BJ (cell line): ENCODE measurements at regions of chr14 and their contacts with region 1.

Region 1: DNA sequence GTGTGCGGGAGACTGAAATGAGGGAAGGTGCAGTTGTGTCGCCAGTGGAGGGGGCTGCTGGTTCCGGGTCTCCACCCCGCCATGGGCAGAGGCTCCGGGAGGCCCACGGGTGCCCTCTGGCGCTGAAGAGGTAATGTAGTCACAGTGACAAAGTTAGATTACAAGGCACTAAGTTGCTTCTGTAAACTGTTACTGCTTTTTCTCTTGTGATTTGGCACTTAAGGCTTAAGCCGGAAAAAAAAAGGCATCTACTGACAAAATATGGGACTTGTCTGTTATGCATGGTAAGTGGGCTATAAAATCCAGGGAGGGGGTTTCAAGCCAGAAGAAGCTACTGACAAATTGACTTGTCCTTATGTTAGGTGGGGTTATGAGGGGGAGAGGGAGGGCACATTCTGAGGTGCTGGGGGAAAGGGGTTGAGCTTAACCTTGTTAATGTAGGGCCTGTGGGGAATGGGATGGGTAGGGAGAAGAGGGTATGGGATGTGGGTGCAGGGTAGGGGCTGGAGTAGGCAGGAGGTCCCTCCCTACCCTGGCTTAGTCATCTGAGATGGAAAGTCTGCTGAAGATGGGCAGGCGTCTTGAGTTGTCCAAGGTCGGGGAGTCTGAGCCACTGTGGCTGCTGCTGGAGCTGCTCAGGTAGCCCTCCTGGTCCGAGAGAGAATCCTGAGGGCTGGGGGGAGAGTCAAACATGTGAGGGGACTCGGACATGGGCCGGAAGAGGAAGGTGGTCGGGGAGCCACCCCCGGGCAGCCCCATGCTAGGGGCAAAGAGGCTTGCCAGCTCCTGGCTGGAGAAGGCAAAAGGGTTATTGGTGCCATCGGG is 3.7 kb downstream of the ZFP36L1 start:
- DNase-seq: no peak
- H3K4me3 ChIP-seq: peak overlapping the region; percentile 93
- H3K27me3 ChIP-seq: no peaks in the 10 kb centered on the region
- CTCF ChIP-seq: peak; percentile 69

Region 2: GRCh38 chr14:68248481-68249255 is 540.5 kb before region 1 on chr14:
- CTCF ChIA-PET with region 1: interaction called, 13 read pairs
- POLR2A ChIA-PET with region 1: interaction called, 30 read pairs
- DNase-seq: no peak
- H3K4me3 ChIP-seq: no peak overlapping the region
- H3K27me3 ChIP-seq: no peaks in the 10 kb centered on the region
- CTCF ChIP-seq: peak; percentile 53

Region 3: GRCh38 chr14:68359837-68360552 is 429.2 kb before region 1 on chr14:
- CTCF ChIA-PET with region 1: no interaction called
- POLR2A ChIA-PET with region 1: interaction called, 20 read pairs
- DNase-seq: peak; percentile 41
- H3K4me3 ChIP-seq: no peak overlapping the region
- H3K27me3 ChIP-seq: no peaks in the 10 kb centered on the region
- CTCF ChIP-seq: no peak

Region 4: DNA sequence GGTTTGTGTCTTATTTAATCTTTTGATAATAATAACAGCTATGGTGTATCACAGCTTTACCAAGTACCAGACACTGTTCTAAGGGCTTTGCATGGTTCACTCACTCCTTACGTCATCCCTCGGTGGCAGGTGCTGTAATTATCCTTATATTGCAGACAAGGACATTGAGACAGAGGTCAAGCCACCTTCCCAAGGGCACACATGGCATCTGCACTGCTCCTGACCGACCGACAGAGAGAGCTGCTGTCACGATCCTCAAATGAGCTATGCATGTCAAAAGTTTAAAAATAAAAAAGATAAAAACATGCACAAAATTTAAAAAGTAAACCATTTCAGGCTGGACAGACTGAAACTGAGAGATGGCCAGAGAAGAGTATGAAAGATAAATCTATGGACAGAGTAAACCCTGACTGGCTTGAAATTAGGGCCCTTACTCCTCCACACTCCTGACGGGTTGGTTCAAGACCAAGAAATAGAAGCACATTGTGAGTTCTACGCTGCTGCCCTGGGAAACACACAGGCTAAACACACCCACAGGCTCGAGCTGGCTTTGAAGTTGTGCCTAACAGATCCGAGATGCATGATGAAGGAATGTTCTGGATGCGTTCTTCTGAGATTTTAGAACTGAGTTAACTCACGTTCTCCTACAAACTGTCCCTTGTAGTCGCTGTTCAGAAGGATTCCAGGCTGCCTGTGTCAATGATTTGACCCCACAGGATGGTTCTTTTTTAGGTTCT is 265.1 kb before region 1 on chr14:
- CTCF ChIA-PET with region 1: interaction called, 4 read pairs
- POLR2A ChIA-PET with region 1: interaction called, 11 read pairs
- DNase-seq: no peak
- H3K4me3 ChIP-seq: no peak overlapping the region
- H3K27me3 ChIP-seq: no peaks in the 10 kb centered on the region
- CTCF ChIP-seq: peak; percentile 43

Region 5: DNA sequence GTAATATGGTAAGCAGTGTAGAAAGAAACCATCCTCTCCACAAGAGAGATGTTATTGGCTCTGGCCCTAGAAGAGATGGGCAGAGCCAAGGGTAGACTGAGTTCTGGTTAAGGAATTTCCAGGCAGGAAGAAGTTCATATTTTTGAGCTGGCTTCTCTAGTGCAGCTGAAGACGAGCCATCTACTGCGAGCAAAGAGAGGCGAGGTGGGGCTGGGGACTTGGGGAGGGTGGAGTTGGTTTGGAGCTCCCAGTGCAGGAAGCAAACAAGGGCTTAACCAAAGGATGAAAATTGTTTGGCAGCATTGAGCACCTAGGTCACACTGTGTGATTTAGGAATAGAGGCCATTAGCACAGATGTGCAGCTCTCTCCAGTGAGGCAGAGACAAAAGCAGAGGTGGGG is 235.9 kb before region 1 on chr14:
- CTCF ChIA-PET with region 1: interaction called, 5 read pairs
- POLR2A ChIA-PET with region 1: interaction called, 11 read pairs
- DNase-seq: no peak
- H3K4me3 ChIP-seq: no peak overlapping the region
- H3K27me3 ChIP-seq: no peaks in the 10 kb centered on the region
- CTCF ChIP-seq: no peak

Region 6: DNA sequence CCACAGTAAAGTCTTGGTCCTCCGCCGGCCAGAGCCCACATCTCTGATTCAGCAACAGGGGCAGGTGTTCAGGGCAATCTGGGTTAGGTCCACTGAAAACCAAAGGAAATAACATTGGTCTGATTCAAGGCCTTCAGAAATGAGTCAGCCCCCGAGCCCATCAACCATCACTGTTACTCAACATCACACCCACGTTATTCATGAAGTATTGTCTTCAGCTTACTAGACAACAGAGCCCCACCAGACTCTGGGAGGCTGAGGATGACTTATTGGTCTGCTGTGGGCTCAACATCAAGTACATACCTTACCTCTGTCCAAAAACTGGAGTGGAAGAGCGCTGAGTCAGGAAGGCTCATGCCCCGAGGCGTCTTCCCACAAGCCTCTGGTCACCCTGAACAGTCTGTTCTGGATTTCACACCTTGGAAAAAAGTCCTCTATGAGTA is 93.9 kb before region 1 on chr14:
- CTCF ChIA-PET with region 1: interaction called, 10 read pairs
- POLR2A ChIA-PET with region 1: interaction called, 19 read pairs
- DNase-seq: peak; percentile 99
- H3K4me3 ChIP-seq: no peak overlapping the region
- H3K27me3 ChIP-seq: no peaks in the 10 kb centered on the region
- CTCF ChIP-seq: no peak

Region 7: DNA sequence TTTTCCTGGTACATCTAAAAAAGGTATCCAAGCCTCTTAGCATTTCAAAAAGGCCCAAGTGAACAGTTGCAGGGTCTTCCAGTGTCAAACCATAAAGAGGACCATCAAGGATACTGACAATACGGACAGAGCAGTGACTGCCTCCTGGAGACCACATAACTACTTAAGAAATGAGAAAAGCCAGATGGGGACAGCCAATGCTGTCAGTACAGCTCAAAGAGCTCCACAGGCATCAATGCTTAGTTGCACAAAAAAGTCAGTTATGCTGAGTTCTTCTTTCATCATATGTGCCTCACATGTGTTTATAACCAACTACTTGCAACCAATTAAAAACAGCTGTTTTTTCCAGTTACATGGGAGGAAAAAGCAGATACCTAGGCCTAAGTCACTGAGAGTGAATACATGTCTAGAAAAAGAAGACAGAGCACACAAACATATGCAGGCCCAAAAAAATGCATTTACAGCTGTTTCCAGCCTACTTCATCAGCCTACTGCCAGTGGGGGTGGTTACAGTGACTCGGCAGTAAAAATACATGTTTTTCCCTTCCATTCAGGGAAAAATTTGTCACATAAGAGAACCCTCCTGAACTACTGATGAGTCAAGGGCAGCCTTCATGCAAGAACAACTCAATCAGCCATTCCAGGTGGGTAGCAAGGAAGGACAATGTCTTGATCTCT is 279.7 kb after region 1 on chr14:
- CTCF ChIA-PET with region 1: no interaction called
- POLR2A ChIA-PET with region 1: no interaction called
- DNase-seq: peak; percentile 80
- H3K4me3 ChIP-seq: no peak overlapping the region
- H3K27me3 ChIP-seq: no peaks in the 10 kb centered on the region
- CTCF ChIP-seq: no peak